Activated CD4-positive, alpha-beta memory T cell treated with anti-CD3 and anti-CD28 coated beads for 36 hours (primary cell): ENCODE measurements at regions of chr5 and their contacts with region 1.

Region 1: DNA sequence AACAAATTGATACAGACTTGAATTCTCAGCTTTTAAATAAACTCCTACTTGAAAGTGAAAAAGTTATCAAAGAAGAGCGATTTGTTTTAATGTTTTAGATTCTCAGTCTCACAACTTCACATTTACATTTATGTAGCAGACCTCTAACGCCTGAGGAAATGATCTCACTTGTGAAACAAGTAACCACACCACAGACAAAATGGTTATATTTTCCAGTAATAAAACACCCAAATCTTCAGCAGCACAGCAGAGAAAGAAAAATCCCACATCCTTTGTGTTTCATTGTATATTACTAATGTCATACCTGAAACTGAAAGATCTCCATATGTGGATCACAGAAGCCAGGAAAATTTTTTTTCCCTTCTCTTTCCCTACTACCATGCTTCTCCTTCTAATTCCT is 29.8 kb upstream of the GZMA start:
- DNase-seq: no peak
- H3K4me3 Mint-ChIP-seq: peak overlapping the region; percentile 16
- H3K27ac Mint-ChIP-seq: peak overlapping the region; percentile 75
- H3K4me1 Mint-ChIP-seq: peaks cover 31% of the 10 kb centered on the region
- H3K27me3 Mint-ChIP-seq: no peaks in the 10 kb centered on the region

Region 2: DNA sequence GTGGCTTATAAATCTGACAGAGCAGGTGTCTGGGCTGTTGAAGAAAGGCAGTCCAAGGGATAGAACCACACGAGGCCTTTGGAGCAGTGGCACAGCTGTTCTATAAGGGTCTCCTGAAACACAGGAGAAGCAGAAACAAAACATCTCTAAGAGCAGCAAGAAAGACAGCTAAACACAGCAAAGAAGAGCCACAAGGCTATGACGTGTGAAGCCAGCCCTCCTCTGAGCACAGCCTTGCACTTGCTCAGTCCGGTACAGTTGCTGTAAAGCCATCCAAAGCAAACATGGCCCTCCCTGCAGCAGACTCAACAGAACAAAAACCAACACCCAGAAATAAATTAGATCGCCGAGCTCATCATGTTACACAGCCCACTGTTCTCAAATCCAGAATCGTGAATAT is 51.3 kb before region 1 on chr5:
- CTCF ChIA-PET with region 1: no interaction called
- POLR2A ChIA-PET with region 1: no interaction called
- intact Hi-C with region 1: loop called (anchors 1 kb)
- DNase-seq: no peak
- H3K4me3 Mint-ChIP-seq: no peak overlapping the region
- H3K27ac Mint-ChIP-seq: no peak overlapping the region
- H3K4me1 Mint-ChIP-seq: peaks cover 43% of the 10 kb centered on the region
- H3K27me3 Mint-ChIP-seq: no peaks in the 10 kb centered on the region

Region 3: GRCh38 chr5:55062039-55062779 is 10.5 kb before region 1 on chr5:
- CTCF ChIA-PET with region 1: no interaction called
- POLR2A ChIA-PET with region 1: interaction called, 7 read pairs
- intact Hi-C with region 1: loop called (anchors 1 kb)
- DNase-seq: peak; percentile 83
- H3K4me3 Mint-ChIP-seq: peak overlapping the region; percentile 63
- H3K27ac Mint-ChIP-seq: peak overlapping the region; percentile 80
- H3K4me1 Mint-ChIP-seq: peaks cover 44% of the 10 kb centered on the region
- H3K27me3 Mint-ChIP-seq: no peaks in the 10 kb centered on the region

Region 4: DNA sequence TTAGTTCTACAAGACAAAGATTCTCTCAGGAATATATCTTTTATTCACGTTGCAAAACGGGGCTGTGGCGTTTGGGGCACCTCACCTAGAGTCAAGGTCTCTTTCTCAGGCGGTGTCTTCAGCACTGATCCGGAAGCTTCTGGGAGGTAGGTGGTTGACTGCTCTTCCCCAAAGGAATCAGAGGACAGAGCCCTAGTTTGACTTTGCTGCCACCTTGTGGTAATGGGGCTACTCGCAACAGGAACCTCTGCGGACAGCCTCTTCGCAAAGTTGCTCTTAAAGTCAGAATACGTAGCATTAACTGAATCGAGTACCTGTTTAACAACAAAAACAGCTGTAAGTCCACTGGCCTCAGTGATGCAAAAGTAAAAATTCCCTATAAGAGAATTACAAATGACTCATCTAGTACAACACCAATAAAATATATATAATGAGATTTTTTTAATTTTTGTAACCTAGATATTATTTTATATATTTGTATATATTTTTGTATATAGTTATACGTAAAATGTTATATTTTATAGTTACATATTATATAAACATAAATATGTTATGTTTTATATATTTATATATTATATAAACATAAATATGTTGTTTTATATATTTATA is 74.0 kb after region 1 on chr5:
- CTCF ChIA-PET with region 1: interaction called, 4 read pairs
- POLR2A ChIA-PET with region 1: no interaction called
- intact Hi-C with region 1: loop called (anchors 5 kb)
- DNase-seq: peak; percentile 89
- H3K4me3 Mint-ChIP-seq: no peak overlapping the region
- H3K27ac Mint-ChIP-seq: no peak overlapping the region
- H3K4me1 Mint-ChIP-seq: peaks cover 12% of the 10 kb centered on the region
- H3K27me3 Mint-ChIP-seq: peaks cover 1% of the 10 kb centered on the region

Region 5: GRCh38 chr5:55205001-55205400 is 132.3 kb after region 1 on chr5:
- CTCF ChIA-PET with region 1: no interaction called
- POLR2A ChIA-PET with region 1: no interaction called
- intact Hi-C with region 1: no loop called
- DNase-seq: no peak
- H3K4me3 Mint-ChIP-seq: no peak overlapping the region
- H3K27ac Mint-ChIP-seq: no peak overlapping the region
- H3K4me1 Mint-ChIP-seq: no peaks in the 10 kb centered on the region
- H3K27me3 Mint-ChIP-seq: peaks cover 26% of the 10 kb centered on the region